Stomach (tissue), 19 donors: ENCODE measurements at regions of chrX and their contacts with region 1.

Region 1: DNA sequence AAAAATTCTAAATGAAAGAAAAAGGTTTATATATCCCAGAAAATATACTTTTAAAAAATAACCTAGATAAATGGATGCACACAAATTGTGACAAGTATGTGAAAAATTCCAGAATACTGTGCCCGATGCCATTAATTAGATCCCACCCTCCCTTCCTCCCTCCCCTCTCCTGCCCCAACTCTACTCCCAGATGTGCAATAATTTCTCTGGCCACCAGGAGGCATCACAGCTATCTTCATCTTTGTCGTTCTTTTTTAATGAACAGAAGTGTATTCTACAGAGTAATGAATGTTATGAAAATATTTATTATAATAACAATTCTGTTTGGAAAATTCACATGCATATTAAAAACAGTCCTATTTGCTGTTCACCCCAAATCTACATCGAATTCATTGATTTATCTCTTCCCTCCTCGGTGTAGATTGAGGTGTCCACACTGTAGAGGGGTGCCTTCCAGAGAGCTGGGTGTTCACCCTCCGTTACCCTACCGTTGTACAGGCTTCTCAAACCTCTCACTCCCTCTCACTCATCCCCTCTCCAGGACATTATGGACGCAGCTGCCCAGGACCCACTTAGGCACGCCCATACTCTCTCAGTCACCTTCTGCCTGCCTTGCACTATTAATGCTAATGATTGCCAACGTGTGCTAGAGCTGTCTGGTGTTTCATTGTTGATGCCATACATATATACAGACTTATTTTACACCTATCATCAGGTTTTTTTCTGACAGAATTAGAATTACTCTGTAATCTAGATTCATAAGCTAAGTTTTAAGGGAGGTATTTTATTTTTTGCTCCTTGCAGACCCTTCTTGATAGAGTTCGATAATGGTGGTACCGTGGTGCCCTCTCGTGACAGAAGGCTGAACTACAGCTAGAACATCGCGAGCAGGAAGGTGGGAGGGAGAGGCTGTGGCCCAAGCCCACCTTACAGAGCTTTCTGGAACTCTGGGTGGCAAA is 14.1 kb downstream of the RAB40AL start:
- DNase-seq: peak; percentile 56 to 66
- H3K4me3 ChIP-seq: peak overlapping the region; percentile 4 to 31 (median 18)
- H3K27ac ChIP-seq: no peak overlapping the region
- H3K4me1 ChIP-seq: peaks cover 0 to 7% (median 2%) of the 10 kb centered on the region in 4 donors
- H3K27me3 ChIP-seq: no peaks in the 10 kb centered on the region
- CTCF ChIP-seq: peak in 5 of 7 experiments; percentile 12 to 69 (median 49)
- EP300 ChIP-seq: no peak
- POLR2A ChIP-seq: no peak

Region 2: GRCh38 chrX:103175944-103176753 is 225.0 kb after region 1 on chrX:
- intact Hi-C with region 1: loop called (anchors 5 kb)
- DNase-seq: peak; percentile 72 to 77
- H3K4me3 ChIP-seq: no peak overlapping the region
- H3K27ac ChIP-seq: no peak overlapping the region
- H3K4me1 ChIP-seq: no peaks in the 10 kb centered on the region
- H3K27me3 ChIP-seq: peaks cover 0 to 11% (median 0%) of the 10 kb centered on the region in 3 donors
- CTCF ChIP-seq: peak in 5 of 7 experiments; percentile 25 to 74 (median 59)
- EP300 ChIP-seq: no peak
- POLR2A ChIP-seq: no peak